Naive thymus-derived CD4-positive, alpha-beta T cell (primary cell): ENCODE measurements at regions of chr18 and their contacts with region 1.

Region 1: DNA sequence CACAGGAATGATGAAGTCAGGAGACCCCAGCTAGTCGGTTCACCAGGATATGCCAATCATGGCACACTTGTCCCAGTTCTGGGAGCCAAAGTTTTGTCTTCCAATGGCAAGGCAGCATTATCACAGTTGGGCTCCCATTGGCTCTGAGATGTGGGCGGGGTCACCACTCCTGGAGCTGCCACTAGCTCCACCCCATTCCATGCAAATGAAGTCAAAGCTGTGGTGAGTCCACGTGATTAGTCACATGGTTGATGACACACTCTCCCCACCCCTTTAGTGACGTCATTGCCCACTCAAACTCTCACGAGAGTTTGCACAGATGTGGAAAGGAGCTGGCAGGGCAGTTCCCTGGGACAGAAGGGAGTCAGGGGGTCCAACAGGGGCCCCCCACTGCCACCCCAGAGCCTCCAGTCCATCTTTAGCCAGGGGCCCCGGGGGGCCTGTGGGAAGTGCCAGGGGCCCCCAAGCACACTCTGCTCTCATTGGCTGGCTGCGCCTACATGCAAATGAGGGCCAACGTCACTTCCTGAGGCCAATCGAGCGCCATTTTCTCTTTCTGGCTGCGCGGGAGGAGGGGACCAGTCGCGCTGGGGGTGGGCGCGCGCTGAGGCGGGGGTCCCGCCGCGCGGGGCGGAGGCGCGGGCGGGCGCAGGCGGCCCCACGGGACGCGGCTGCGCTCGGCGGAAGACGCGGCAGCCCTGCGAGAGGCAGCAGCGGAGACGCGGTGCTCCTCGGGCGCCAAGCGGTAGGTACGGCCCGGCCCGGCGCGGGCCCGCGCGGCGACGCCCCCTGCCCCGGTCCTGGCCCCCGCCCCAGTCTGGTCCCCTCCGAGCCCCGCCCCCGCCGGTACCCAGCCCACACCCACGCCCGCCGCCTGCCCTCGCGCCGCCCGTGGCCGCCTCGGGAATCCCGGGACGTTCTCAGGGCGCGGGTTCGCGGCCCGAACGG is at the start of gene ADNP2:
- DNase-seq: peak; percentile 72 to 93 (median 89)
- ATAC-seq: peak; percentile 89
- H3K4me3 ChIP-seq: peak within 1 kb of the TSS; percentile 69
- H3K4me3 Mint-ChIP-seq: peak within 1 kb of the TSS; percentile 72 to 90 (median 86)
- H3K27ac ChIP-seq: peak within 1 kb of the TSS; percentile 85
- H3K27ac Mint-ChIP-seq: peak within 1 kb of the TSS; percentile 59 to 97 (median 93)
- H3K4me1 ChIP-seq: peaks cover 14 to 19% of the 10 kb centered on the region in 2 donors
- H3K4me1 Mint-ChIP-seq: peaks cover 23 to 58% (median 44%) of the 10 kb centered on the region in 7 donors
- H3K27me3 ChIP-seq: no peaks in the 10 kb centered on the region
- H3K27me3 Mint-ChIP-seq: peaks cover 0 to 3% (median 0%) of the 10 kb centered on the region in 5 donors
- total RNA-seq, gene ADNP2: 18.4 to 41.4 (median 25.3) TPM

Region 2: DNA sequence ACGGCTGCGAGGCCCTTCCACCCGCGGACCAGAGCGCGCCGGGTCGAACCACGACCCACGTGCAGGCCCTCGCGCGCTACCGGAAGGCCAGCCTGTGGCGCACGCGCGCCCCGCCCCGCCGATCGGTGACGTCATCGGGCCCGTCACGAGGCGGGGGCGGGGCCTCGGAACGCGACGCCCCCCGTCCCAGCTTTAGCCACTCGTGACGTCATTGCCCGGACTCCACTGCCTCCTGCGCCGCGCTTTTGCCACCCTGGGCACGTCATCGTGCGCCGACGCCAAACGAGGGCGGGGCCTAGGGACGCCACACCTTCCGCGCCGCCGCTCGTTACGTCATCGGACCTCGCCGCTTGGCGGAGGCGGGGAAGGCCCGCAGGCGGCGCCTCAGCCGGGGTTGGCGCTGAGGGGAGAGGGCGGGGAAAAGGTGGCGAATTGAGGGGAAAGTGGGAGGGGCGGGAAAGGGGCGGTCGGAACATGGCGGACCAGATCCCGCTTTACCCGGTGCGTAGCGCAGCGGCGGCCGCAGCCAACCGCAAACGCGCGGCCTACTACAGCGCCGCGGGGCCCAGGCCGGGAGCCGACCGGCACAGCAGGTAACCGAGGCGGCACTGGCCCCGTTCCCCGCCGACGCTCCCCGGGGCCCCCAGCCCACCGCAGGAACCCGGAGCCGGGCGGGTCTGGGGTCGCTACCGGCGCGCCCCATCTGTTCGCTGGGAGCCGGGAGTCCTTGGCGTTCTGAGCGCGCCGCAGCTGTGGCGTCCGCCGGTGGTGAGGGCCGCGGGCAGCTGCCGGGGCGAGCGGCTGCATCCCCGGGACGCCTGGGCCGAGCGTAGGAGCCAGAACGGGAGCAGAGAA is 1039.8 kb before region 1 on chr18 and contains the start of gene ATP9B:
- CTCF ChIA-PET with region 1: no interaction called
- POLR2A ChIA-PET with region 1: no interaction called
- intact Hi-C with region 1: loop called in 1 of 2 experiments (anchors 5 kb)
- DNase-seq: peak; percentile 97 to 100 (median 99)
- ATAC-seq: peak; percentile 91
- H3K4me3 ChIP-seq: peak within 1 kb of the TSS; percentile 59
- H3K4me3 Mint-ChIP-seq: peak within 1 kb of the TSS; percentile 85 to 98 (median 94)
- H3K27ac ChIP-seq: peak within 1 kb of the TSS; percentile 98
- H3K27ac Mint-ChIP-seq: peak within 1 kb of the TSS; percentile 98 to 100 (median 99)
- H3K4me1 ChIP-seq: peaks cover 12 to 29% of the 10 kb centered on the region in 2 donors
- H3K4me1 Mint-ChIP-seq: peaks cover 28 to 63% (median 51%) of the 10 kb centered on the region in 7 donors
- H3K27me3 ChIP-seq: no peaks in the 10 kb centered on the region
- H3K27me3 Mint-ChIP-seq: peaks cover under 1 to 21% (median 5%) of the 10 kb centered on the region in 5 donors
- total RNA-seq, gene ATP9B: 36.1 to 90.5 (median 90.0) TPM

Region 3: DNA sequence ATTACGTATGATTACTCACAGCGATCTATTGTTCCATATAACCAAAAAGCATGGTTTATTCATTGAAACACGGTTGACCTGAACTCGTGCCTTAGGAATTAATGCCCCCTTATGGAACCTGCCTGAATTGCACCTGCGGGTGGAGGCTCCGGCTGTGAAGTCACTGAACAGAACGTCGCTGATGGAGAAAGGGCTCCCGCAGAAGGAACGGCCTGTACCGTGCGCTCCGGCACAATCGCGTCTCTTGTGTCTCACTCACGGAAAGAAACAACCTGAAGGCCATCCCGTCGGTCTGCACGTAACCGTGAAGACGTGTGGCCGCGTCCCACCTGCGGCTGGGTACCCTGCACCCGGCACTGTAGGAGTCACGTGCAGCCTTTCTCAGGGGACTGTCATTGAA is 580.2 kb before region 1 on chr18:
- CTCF ChIA-PET with region 1: no interaction called
- POLR2A ChIA-PET with region 1: no interaction called
- intact Hi-C with region 1: loop called (anchors 5 kb)
- DNase-seq: peak; percentile 47 to 88 (median 77)
- ATAC-seq: peak; percentile 65
- H3K4me3 ChIP-seq: no peak overlapping the region
- H3K4me3 Mint-ChIP-seq: peak overlapping the region in 1 of 10 donors; percentile 6
- H3K27ac ChIP-seq: no peak overlapping the region
- H3K27ac Mint-ChIP-seq: peak overlapping the region in 6 of 9 donors; percentile 30 to 85 (median 79)
- H3K4me1 ChIP-seq: peaks cover 8 to 21% of the 10 kb centered on the region in 2 donors
- H3K4me1 Mint-ChIP-seq: peaks cover 7 to 49% (median 33%) of the 10 kb centered on the region in 7 donors
- H3K27me3 ChIP-seq: no peaks in the 10 kb centered on the region
- H3K27me3 Mint-ChIP-seq: no peaks in the 10 kb centered on the region

Region 4: GRCh38 chr18:80034068-80034851 is 74.7 kb before region 1 on chr18 and contains the start of gene RBFA:
- CTCF ChIA-PET with region 1: no interaction called
- POLR2A ChIA-PET with region 1: interaction called, 9 read pairs
- intact Hi-C with region 1: loop called (anchors 1 kb)
- DNase-seq: peak; percentile 95 to 100 (median 98)
- ATAC-seq: peak; percentile 88
- H3K4me3 ChIP-seq: peak within 1 kb of the TSS; percentile 83
- H3K4me3 Mint-ChIP-seq: peak within 1 kb of the TSS; percentile 84 to 95 (median 91)
- H3K27ac ChIP-seq: peak within 1 kb of the TSS; percentile 87
- H3K27ac Mint-ChIP-seq: peak within 1 kb of the TSS; percentile 86 to 99 (median 96)
- H3K4me1 ChIP-seq: peaks cover 8 to 14% of the 10 kb centered on the region in 2 donors
- H3K4me1 Mint-ChIP-seq: peaks cover 22 to 36% (median 29%) of the 10 kb centered on the region in 7 donors
- H3K27me3 ChIP-seq: no peaks in the 10 kb centered on the region
- H3K27me3 Mint-ChIP-seq: no peaks in the 10 kb centered on the region
- total RNA-seq, gene RBFA: 17.6 to 23.5 (median 21.7) TPM

Region 5: GRCh38 chr18:80056095-80056494 is 52.9 kb before region 1 on chr18:
- CTCF ChIA-PET with region 1: no interaction called
- POLR2A ChIA-PET with region 1: no interaction called
- intact Hi-C with region 1: no loop called
- DNase-seq: no peak
- ATAC-seq: no peak
- H3K4me3 ChIP-seq: no peak overlapping the region
- H3K4me3 Mint-ChIP-seq: no peak overlapping the region
- H3K27ac ChIP-seq: no peak overlapping the region
- H3K27ac Mint-ChIP-seq: no peak overlapping the region
- H3K4me1 ChIP-seq: no peaks in the 10 kb centered on the region
- H3K4me1 Mint-ChIP-seq: no peaks in the 10 kb centered on the region
- H3K27me3 ChIP-seq: no peaks in the 10 kb centered on the region
- H3K27me3 Mint-ChIP-seq: no peaks in the 10 kb centered on the region

Region 6: GRCh38 chr18:80147418-80148325 is 38.7 kb after region 1 on chr18:
- CTCF ChIA-PET with region 1: no interaction called
- POLR2A ChIA-PET with region 1: no interaction called
- intact Hi-C with region 1: loop called (anchors 1 kb)
- DNase-seq: peak; percentile 41 to 79 (median 62)
- ATAC-seq: peak; percentile 89
- H3K4me3 ChIP-seq: peak overlapping the region; percentile 55
- H3K4me3 Mint-ChIP-seq: peak overlapping the region; percentile 78 to 91 (median 86)
- H3K27ac ChIP-seq: no peak overlapping the region
- H3K27ac Mint-ChIP-seq: peak overlapping the region in 7 of 9 donors; percentile 18 to 78 (median 55)
- H3K4me1 ChIP-seq: peaks cover 7 to 9% of the 10 kb centered on the region in 2 donors
- H3K4me1 Mint-ChIP-seq: peaks cover 0 to 26% (median 17%) of the 10 kb centered on the region in 7 donors
- H3K27me3 ChIP-seq: peaks cover 0 to 2% of the 10 kb centered on the region in 2 donors
- H3K27me3 Mint-ChIP-seq: peaks cover 0 to 27% (median 10%) of the 10 kb centered on the region in 5 donors